Mammary epithelial cell (primary cell): ENCODE measurements at regions of chr4 and their contacts with region 1.

Region 1: GRCh38 chr4:173318648-173319211 is 15.4 kb downstream of the HMGB2 start:
- DNase-seq: peak; percentile 56
- H3K4me3 ChIP-seq: no peak overlapping the region
- H3K27ac ChIP-seq: no peak overlapping the region
- H3K4me1 ChIP-seq: peaks cover 18% of the 10 kb centered on the region
- H3K27me3 ChIP-seq: no peaks in the 10 kb centered on the region
- CTCF ChIP-seq: peak; percentile 2 to 27

Region 2: DNA sequence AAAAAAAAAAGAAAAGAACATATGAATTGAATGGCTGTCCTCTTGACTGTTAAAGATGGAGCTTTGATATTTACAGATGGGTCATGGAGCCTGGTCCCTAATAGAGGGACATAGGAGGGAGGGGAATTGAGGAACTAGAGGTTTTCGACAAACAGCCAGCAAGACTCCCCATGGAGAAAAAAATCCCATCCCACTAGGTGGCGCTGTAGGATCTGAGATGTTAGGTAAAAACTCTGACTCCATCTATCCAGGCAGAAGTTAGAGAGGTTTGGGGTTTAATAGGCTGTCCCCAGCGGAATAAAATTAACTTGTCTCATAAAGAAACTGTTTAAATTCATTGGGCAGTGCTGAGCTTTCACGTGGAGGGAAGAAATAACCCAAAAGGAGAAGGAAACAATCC is 30.4 kb before region 1 on chr4:
- CTCF ChIA-PET with region 1: no interaction called
- dilution Hi-C with region 1: no loop called
- in situ Hi-C with region 1: no loop called
- intact Hi-C with region 1: loop called (anchors 2 kb)
- DNase-seq: peak; percentile 52
- H3K4me3 ChIP-seq: no peak overlapping the region
- H3K27ac ChIP-seq: no peak overlapping the region
- H3K4me1 ChIP-seq: peaks cover 9% of the 10 kb centered on the region
- H3K27me3 ChIP-seq: no peaks in the 10 kb centered on the region
- CTCF ChIP-seq: peak; percentile 54 to 67

Region 3: DNA sequence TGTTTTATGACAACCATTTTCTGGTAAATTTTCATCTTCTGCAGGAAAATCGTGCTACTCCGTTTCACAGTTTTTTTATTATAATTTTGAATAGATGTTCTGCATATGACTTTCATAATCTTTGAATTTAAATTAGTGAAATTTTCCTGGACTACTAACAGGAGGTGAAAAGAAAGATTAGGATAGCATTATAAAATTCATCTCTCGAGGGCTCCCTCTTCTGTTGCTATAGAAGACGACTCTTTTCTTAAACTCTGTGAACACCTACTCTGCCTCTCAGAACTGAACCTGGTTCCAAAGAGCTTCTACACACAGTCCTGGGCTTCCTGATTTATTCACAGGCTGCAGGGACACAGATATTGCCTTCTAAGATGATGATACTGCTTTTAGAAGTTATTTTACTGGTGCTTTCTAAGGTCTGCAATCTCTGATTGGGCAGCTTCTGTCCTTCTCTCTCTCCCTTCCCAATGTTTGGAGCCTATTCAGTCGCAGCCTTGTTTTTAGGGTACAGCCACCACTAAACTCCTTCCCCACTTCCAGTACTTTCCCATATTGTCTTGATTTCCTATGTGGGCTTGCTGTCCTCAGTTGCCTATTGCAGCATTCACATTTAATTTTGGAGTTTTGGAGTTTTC is 42.0 kb after region 1 on chr4:
- CTCF ChIA-PET with region 1: no interaction called
- dilution Hi-C with region 1: no loop called
- in situ Hi-C with region 1: no loop called
- intact Hi-C with region 1: loop called (anchors 2 kb)
- DNase-seq: no peak
- H3K4me3 ChIP-seq: no peak overlapping the region
- H3K27ac ChIP-seq: no peak overlapping the region
- H3K4me1 ChIP-seq: peaks cover 2% of the 10 kb centered on the region
- H3K27me3 ChIP-seq: peaks cover 2% of the 10 kb centered on the region
- CTCF ChIP-seq: peak in 1 of 2 donors; percentile 39

Region 4: GRCh38 chr4:173494013-173494970 is 175.6 kb after region 1 on chr4:
- CTCF ChIA-PET with region 1: no interaction called
- dilution Hi-C with region 1: no loop called
- in situ Hi-C with region 1: no loop called
- intact Hi-C with region 1: loop called (anchors 1 kb)
- DNase-seq: peak; percentile 66
- H3K4me3 ChIP-seq: peak overlapping the region; percentile 18 to 43 (median 42)
- H3K27ac ChIP-seq: no peak overlapping the region
- H3K4me1 ChIP-seq: no peaks in the 10 kb centered on the region
- H3K27me3 ChIP-seq: no peaks in the 10 kb centered on the region
- CTCF ChIP-seq: peak; percentile 78 to 88

Region 5: DNA sequence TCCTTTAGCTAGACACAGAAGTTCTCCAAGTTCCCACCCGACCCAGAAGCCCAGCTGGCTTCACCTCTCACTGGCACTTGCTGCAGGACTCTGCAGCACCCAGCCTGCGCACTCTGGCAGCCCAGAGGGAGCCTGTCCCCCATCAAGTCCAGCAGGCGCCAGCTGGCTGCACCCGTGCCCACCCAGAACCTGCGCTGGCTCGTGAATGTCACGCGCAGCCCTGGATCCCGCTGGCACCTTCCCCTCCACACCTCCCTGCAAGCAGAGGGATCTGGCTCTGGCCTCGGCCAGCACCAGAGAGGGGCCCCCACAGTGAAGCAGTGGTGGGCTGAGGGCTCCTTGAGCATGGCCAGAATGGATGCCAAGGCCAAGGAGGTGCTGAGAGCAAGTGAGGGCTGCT is 398.9 kb after region 1 on chr4:
- CTCF ChIA-PET with region 1: no interaction called
- dilution Hi-C with region 1: no loop called
- in situ Hi-C with region 1: no loop called
- intact Hi-C with region 1: no loop called
- DNase-seq: no peak
- H3K4me3 ChIP-seq: no peak overlapping the region
- H3K27ac ChIP-seq: no peak overlapping the region
- H3K4me1 ChIP-seq: no peaks in the 10 kb centered on the region
- H3K27me3 ChIP-seq: no peaks in the 10 kb centered on the region
- CTCF ChIP-seq: no peak